ENCODE measurements at regions of chr9 and their contacts with region 1.

Region 1: GRCh38 chr9:72271613-72272478 is 93.2 kb downstream of the ZFAND5 start:
- DNase-seq: peak in 4 of 10 donors; percentile 25 to 64 (median 47)
- H3K4me3 ChIP-seq: no peak overlapping the region
- H3K27ac ChIP-seq: no peak overlapping the region
- H3K27me3 ChIP-seq: no peaks in the 10 kb centered on the region
- CTCF ChIP-seq: peak; percentile 81 to 98 (median 92)

Region 2: DNA sequence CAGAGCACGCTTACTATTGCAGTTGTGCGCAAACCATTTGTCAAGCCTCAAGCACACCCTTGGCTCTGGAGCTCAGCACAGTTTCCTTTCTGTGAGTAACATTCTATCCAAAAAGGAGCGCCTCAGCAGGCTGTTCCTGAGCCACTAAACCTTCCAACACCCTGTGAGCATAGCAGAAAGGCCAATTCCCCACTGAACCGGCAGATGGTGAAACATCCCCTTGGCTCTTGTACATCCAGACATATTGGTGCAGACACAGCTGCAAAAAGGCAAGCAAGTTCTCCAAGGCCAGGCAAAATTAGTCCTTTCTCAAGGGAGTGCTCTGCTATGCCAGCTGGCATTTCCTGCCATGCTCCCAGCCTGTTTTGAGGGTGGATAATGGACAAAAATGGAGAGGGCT is 459.5 kb before region 1 on chr9:
- intact Hi-C with region 1: loop called (anchors 5 to 10 kb)
- DNase-seq: peak; percentile 23 to 79 (median 58)
- H3K4me3 ChIP-seq: peak overlapping the region in 3 of 59 donors; percentile 5 to 17 (median 5)
- H3K27ac ChIP-seq: peak overlapping the region in 41 of 59 donors; percentile 5 to 85 (median 56)
- H3K27me3 ChIP-seq: no peaks in the 10 kb centered on the region
- CTCF ChIP-seq: peak in 54 of 56 donors; percentile 35 to 75 (median 58)

Region 3: DNA sequence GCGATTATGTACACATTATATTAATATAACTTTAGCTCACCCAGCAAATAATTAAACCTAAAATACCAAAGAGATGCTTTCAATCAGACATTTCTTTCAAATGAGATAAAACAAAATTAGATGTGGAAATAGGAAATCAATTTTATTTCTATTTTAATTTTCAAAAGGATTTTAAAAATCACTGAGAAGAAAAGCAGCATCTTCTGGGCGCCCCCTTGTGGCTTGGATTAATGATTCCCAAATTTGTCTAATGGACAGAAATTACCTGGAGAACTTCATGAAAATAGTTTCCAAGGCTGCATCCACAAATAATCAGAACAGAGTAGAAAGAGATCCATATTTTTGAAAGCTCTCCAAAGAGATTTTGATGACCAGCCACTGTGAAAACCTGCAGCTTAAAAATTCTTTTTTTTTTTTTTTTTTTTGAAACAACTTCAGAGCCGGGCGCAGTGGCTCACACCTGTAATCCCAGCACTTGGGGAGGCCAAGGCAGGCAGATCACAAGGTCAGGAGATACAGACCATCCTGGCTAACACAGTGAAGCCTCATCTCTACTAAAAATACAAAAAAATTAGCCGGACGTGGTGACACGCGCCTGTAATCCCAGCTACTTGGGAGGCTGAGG is 452.6 kb before region 1 on chr9:
- intact Hi-C with region 1: loop called (anchors 5 to 10 kb)
- DNase-seq: peak in 3 of 10 donors; percentile 17 to 43 (median 38)
- H3K4me3 ChIP-seq: no peak overlapping the region
- H3K27ac ChIP-seq: no peak overlapping the region
- H3K27me3 ChIP-seq: no peaks in the 10 kb centered on the region
- CTCF ChIP-seq: peak; percentile 62 to 94 (median 80)

Region 4: DNA sequence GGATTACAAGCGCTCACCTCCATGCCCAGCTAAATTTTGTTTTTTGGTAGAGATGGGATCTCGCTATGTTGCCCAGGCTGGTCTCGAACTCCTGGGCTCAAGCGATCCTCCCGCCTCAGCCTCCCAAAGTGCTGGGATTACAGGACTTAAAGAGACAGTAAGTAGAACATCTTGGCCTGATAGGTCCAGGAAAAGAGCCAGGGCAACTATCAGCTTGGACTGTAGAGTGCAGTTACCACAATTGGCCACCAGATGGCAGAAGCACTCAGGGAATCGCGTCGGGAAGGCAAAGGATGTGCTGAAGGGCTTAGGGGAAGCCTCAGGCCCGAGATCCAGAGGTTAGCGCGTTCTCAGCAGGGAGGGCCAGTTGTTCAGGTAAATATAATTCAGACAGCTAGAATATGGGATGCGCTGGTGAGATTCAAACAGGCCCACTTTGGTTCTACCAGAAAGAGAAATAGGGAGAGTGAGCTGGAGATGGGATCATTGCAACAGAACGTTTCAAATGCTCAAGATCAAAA is 232.9 kb before region 1 on chr9:
- intact Hi-C with region 1: loop called (anchors 1 to 2 kb)
- DNase-seq: peak; percentile 57 to 88 (median 80)
- H3K4me3 ChIP-seq: peak overlapping the region in 1 of 59 donors; percentile 11
- H3K27ac ChIP-seq: peak overlapping the region in 7 of 59 donors; percentile 8 to 71 (median 46)
- H3K27me3 ChIP-seq: no peaks in the 10 kb centered on the region
- CTCF ChIP-seq: peak; percentile 94 to 99 (median 98)